H1 (cell line): ENCODE measurements at regions of chr14 and their contacts with region 1.

Region 1: DNA sequence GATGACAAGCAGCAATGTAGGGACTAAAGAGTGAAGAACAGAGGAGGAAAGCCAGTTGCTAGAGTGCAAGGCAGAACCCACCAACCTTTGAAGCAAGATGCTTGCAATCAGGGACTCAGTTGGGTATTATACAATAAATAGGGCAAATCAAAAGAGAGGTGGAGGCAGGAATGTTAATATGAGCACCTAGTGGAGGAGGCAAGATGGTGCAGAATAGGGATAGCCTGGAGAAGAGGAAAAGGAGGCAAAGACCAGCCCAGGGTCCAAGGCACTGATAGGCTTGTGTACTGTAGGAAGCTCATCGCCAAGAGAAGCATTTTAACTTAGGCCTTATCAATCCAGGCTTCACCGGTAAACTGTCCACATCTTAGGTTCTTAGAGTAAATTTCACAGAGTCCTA is 137.2 kb downstream of the ARMH4 start:
- DNase-seq: no peak
- H3K4me3 ChIP-seq: no peak overlapping the region
- H3K27ac ChIP-seq: no peak overlapping the region
- H3K4me1 ChIP-seq: no peaks in the 10 kb centered on the region
- H3K27me3 ChIP-seq: no peaks in the 10 kb centered on the region
- CTCF ChIP-seq: peak in 1 of 3 experiments; percentile 30; a peak in 1 of 4 replicates
- EP300 ChIP-seq: no peak
- POLR2A ChIP-seq: no peak
- RAD21 ChIP-seq: no peak

Region 2: DNA sequence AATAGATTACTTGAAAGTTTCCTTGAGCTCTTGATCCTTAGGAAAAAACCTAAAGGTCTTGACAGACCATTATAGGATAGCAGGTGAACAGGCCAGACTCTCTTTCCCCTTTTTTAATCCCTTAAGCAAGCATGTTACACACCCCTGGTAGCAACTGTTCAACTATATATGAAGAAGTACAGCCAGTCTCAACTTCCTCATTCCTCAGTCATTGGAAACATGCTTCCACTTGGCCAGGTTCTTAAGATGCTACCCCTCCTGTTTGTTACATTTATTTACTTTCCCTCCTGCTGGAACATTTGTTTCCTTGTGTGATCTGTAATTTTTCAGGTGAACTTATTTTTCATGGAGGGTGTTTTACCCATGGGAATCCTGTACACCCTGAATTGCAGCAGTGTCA is 13.1 kb after region 1 on chr14:
- CTCF ChIA-PET with region 1: interaction called, 20 read pairs
- POLR2A ChIA-PET with region 1: no interaction called
- DNase-seq: no peak
- H3K4me3 ChIP-seq: no peak overlapping the region
- H3K27ac ChIP-seq: no peak overlapping the region
- H3K4me1 ChIP-seq: 0 out of 7 replicates have a peak, but pooled peaks cover 0 to 2% (median 0%) of the 10 kb centered on the region in 4 experiments
- H3K27me3 ChIP-seq: no peaks in the 10 kb centered on the region
- CTCF ChIP-seq: no peak
- EP300 ChIP-seq: no peak
- POLR2A ChIP-seq: no peak
- RAD21 ChIP-seq: no peak